ENCODE measurements at regions of chr4 and their contacts with region 1.

Region 1: DNA sequence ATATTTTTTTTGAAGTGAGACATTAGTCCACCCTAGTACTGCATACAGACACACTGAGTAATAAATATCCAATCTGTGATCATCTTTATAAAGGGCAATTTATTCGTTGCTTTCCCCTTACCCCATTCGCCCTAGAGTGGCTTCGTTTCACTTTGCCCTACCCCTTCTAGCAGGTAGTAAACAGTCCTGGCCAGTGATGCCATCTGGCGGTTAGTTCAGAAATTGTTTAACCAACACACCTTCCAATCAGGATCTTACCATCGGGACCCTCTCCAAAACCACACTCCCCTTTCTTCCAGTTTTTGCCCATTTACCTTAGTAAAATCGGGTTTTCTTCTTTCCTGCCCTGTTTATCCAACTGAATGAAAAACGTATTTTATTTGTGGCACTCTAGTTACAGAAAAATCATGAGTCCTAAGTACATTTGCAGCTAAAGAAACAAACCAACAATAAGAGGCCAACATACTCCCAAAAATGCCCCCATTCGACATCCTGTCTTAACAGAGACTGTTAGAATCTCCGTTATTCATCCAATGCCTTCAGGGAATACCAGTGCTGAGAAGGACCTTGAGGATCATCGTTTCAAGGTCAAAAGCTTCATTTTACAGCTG is 2.2 kb downstream of the PPA2 start:
- DNase-seq: peak; percentile 69
- ATAC-seq: peak; percentile 36
- H3K4me3 ChIP-seq: peak overlapping the region; percentile 9 to 87; a peak in 3 of 4 replicates
- H3K27ac ChIP-seq: no peak overlapping the region
- H3K4me1 ChIP-seq: peaks cover 8 to 18% of the 10 kb centered on the region in 2 experiments
- H3K27me3 ChIP-seq: no peaks in the 10 kb centered on the region
- CTCF ChIP-seq: peak; percentile 52 to 72 (median 58); a peak in 5 of 6 replicates
- POLR2A ChIP-seq: no peak
- RAD21 ChIP-seq: peak; percentile 79

Region 2: GRCh38 chr4:103996637-103997036 is 1475.0 kb before region 1 on chr4:
- CTCF ChIA-PET with region 1: no interaction called
- POLR2A ChIA-PET with region 1: no interaction called
- RAD21 ChIA-PET with region 1: no interaction called
- intact Hi-C with region 1: loop called (anchors 1 kb)
- DNase-seq: peak; percentile 78
- ATAC-seq: peak; percentile 91
- H3K4me3 ChIP-seq: peak overlapping the region; percentile 26 to 43
- H3K27ac ChIP-seq: peak overlapping the region; percentile 39; the same call in 1 of the 2 replicates
- H3K4me1 ChIP-seq: peaks cover 11 to 19% of the 10 kb centered on the region in 2 experiments; a peak in 3 of 4 replicates
- H3K27me3 ChIP-seq: no peaks in the 10 kb centered on the region
- CTCF ChIP-seq: no peak
- POLR2A ChIP-seq: no peak
- RAD21 ChIP-seq: no peak

Region 3: DNA sequence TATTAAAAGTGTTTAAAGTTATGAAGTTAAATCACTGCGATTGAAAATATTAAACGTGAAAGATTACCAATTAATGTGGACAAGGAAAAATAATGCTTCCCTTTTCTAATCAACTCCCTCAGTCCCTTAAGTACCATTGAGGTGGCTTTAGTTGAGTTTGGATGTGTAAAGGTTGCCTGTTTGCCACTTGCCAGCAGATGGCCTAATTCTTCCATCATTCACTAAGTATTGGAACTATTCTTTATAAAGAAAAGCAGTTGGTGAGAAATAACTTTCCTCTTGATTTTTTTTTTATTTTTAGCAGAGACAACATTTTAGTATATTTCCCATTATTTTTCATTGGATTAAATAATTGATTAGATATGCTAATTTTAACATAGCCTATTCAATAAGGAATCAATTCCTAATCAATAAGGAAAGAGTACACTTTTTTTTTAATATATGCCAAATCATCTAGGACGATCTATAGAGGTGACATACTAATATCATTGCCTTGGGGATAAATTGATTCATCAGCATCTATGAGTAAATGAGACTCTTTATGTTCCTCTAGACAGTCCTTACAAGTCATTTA is 1455.9 kb before region 1 on chr4:
- CTCF ChIA-PET with region 1: no interaction called
- POLR2A ChIA-PET with region 1: no interaction called
- RAD21 ChIA-PET with region 1: no interaction called
- intact Hi-C with region 1: loop called (anchors 1 kb)
- DNase-seq: peak; percentile 28
- ATAC-seq: peak; percentile 63; the same call in 1 of the 2 replicates
- H3K4me3 ChIP-seq: no peak overlapping the region
- H3K27ac ChIP-seq: no peak overlapping the region
- H3K4me1 ChIP-seq: no peaks in the 10 kb centered on the region
- H3K27me3 ChIP-seq: no peaks in the 10 kb centered on the region
- CTCF ChIP-seq: peak in 2 of 3 experiments; percentile 42 to 58; a peak in 4 of 6 replicates
- POLR2A ChIP-seq: no peak
- RAD21 ChIP-seq: peak; percentile 69

Region 4: DNA sequence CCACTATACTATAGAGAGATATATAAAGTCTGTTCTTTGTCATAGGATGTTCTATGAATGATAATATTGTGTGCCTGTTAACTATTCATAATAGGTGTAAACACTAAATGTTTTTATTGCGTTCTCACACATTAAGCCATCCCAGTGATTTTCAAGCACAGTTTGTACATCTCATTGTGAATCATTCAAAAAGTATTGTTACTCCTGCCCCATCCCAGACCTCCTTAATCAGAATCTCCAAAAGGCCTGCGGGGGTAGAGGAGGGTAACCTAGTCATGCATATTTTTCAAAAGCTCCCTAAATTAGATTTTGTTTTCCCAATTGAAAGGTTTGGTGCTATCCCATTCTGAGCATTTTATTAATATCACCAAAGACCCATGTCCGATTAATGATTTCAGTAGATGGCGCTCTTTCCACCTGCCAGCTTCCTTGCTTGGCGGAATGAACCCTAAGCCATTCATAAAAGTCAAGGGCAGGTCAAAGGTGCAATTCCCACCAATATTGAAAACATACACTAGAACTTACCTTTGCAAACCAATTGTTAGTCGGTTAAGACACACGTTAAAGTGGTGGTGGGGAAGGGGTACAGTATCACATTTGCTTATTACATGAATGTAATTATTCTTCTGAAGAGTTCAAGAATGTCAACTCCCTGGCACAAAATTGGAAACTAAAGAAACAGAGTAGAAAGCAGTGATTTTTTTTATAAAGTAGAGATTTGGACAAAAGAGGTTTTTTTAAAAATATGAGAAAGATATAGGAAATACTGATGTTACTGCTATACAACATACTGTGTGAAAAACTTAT is 330.8 kb before region 1 on chr4:
- CTCF ChIA-PET with region 1: interaction called, 9 read pairs
- POLR2A ChIA-PET with region 1: no interaction called
- RAD21 ChIA-PET with region 1: interaction called in 1 of 2 experiments, 3 read pairs
- intact Hi-C with region 1: loop called (anchors 1 kb)
- DNase-seq: no peak
- ATAC-seq: peak; percentile 75; the same call in 1 of the 2 replicates
- H3K4me3 ChIP-seq: no peak overlapping the region
- H3K27ac ChIP-seq: no peak overlapping the region
- H3K4me1 ChIP-seq: peaks cover 6 to 11% of the 10 kb centered on the region in 2 experiments; a peak in 3 of 4 replicates
- H3K27me3 ChIP-seq: no peaks in the 10 kb centered on the region
- CTCF ChIP-seq: peak; percentile 63 to 79 (median 67); a peak in 5 of 6 replicates
- POLR2A ChIP-seq: no peak
- RAD21 ChIP-seq: peak; percentile 81

Region 5: DNA sequence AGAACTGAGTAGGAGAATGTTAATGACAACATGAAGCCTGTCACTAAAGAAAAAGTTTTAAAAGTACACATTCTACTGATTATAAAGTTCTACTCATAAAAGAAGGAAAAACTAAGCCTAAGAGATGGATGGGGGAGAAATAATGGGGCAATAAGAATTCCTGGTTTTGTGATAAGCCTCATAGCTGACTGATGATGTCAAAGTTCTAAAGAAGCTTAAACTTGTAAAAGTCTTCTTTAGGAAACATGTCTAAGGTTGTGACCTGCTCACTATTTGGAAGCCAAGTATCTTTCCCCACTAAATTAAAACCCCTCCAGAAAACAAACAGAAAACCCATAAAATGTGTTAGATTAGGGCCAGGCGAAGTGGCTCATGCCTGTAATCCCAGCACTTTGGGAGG is 1129.8 kb after region 1 on chr4:
- CTCF ChIA-PET with region 1: no interaction called
- POLR2A ChIA-PET with region 1: no interaction called
- RAD21 ChIA-PET with region 1: no interaction called
- intact Hi-C with region 1: no loop called
- DNase-seq: no peak
- ATAC-seq: no peak
- H3K4me3 ChIP-seq: no peak overlapping the region
- H3K27ac ChIP-seq: no peak overlapping the region
- H3K4me1 ChIP-seq: no peaks in the 10 kb centered on the region
- H3K27me3 ChIP-seq: no peaks in the 10 kb centered on the region
- CTCF ChIP-seq: no peak
- POLR2A ChIP-seq: no peak
- RAD21 ChIP-seq: no peak